Adrenal gland (tissue), 19 donors: ENCODE measurements at regions of chr7 and their contacts with region 1.

Region 1: GRCh38 chr7:63876707-63877322 is 121.8 kb upstream of the ZNF722 start:
- DNase-seq: no peak
- H3K4me3 ChIP-seq: no peak overlapping the region
- H3K27ac ChIP-seq: no peak overlapping the region
- H3K4me1 ChIP-seq: no peaks in the 10 kb centered on the region
- H3K27me3 ChIP-seq: no peaks in the 10 kb centered on the region
- CTCF ChIP-seq: no peak
- POLR2A ChIP-seq: no peak

Region 2: DNA sequence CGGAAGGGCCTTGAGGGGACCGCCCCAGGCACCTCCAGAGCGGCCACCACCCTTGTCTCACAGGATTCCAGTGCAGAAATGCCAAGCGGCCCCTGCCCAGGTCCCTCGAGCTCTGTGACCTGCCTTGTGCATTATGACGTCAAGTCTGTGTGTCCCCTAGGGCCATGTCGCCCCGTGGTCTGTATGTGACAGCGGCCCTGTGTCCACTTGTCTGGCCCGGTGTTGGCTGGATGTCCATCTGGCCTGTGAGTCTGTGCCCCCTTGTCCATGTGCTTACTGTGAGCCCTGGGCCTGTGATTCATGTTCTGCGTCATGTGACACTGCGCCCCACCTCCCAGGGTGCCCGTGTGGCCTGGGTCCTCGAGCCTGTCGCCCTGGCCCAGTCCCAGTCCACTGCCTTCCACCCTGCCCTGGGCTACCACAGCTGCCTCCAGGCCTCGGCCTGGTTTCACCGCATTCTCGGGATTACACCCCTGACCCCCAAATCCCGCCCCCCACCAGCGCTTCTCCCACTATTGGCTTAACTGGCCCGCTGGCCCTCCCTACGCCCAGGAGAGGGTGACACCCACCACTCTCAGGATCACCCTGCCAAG is 55.3 kb after region 1 on chr7:
- intact Hi-C with region 1: loop called in 1 of 2 experiments (anchors 10 kb)
- DNase-seq: no peak
- H3K4me3 ChIP-seq: no peak overlapping the region
- H3K27ac ChIP-seq: no peak overlapping the region
- H3K4me1 ChIP-seq: peaks cover 0 to under 1% of the 10 kb centered on the region in 2 donors
- H3K27me3 ChIP-seq: no peaks in the 10 kb centered on the region
- CTCF ChIP-seq: no peak
- POLR2A ChIP-seq: no peak